Activated CD8-positive, alpha-beta T cell treated with anti-CD3 and anti-CD28 coated beads, Interleukin-2, amount 10 ng/mL, durations not matched to agents 7 days and 5 days (primary cell): ENCODE measurements at regions of chr4 and their contacts with region 1.

Region 1: GRCh38 chr4:173334085-173334772 is at the start of gene HMGB2:
- DNase-seq: peak; percentile 100
- ATAC-seq: peak; percentile 95
- H3K4me3 Mint-ChIP-seq: peak within 1 kb of the TSS; percentile 97
- H3K27ac Mint-ChIP-seq: peak within 1 kb of the TSS; percentile 98
- H3K4me1 Mint-ChIP-seq: peaks cover 38% of the 10 kb centered on the region
- H3K27me3 Mint-ChIP-seq: no peaks in the 10 kb centered on the region
- total RNA-seq, gene HMGB2: 861 to 891 TPM

Region 2: GRCh38 chr4:173168396-173169177 is 165.6 kb before region 1 on chr4 and contains the start of gene GALNT7:
- CTCF ChIA-PET with region 1: no interaction called
- POLR2A ChIA-PET with region 1: interaction called, 13 read pairs
- DNase-seq: peak; percentile 75
- ATAC-seq: peak; percentile 59
- H3K4me3 Mint-ChIP-seq: peak within 1 kb of the TSS; percentile 94
- H3K27ac Mint-ChIP-seq: peak within 1 kb of the TSS; percentile 94
- H3K4me1 Mint-ChIP-seq: peaks cover 47% of the 10 kb centered on the region
- H3K27me3 Mint-ChIP-seq: no peaks in the 10 kb centered on the region
- total RNA-seq, gene GALNT7: 16.2 to 16.7 TPM

Region 3: DNA sequence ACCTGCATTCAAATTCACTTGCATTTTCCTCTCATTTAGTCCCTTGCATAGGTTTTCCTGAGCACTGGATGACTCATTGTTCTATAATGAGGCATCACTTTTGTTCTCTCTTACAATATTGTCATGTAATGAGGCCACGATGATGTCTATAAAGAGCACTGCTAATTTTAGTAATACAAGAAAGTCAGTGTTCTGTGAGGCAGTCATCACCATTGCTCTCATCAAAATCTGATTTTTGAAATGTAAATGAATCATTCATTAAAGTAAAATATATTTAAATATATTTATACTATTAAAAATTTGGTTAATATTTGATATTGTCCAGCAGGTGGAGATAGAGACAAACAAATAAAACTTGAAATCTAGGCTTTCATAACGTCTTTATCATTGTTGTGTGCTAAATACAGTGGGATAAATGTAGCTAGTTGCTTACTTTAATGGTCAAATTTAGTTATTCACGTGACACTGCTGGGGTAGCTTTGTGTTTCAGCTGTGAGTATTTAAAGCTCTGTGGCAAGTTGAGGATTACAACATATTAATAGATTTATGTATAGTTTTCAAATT is 15.5 kb before region 1 on chr4:
- CTCF ChIA-PET with region 1: interaction called, 13 read pairs
- POLR2A ChIA-PET with region 1: interaction called, 40 read pairs
- DNase-seq: no peak
- ATAC-seq: no peak
- H3K4me3 Mint-ChIP-seq: no peak overlapping the region
- H3K27ac Mint-ChIP-seq: no peak overlapping the region
- H3K4me1 Mint-ChIP-seq: no peaks in the 10 kb centered on the region
- H3K27me3 Mint-ChIP-seq: no peaks in the 10 kb centered on the region

Region 4: DNA sequence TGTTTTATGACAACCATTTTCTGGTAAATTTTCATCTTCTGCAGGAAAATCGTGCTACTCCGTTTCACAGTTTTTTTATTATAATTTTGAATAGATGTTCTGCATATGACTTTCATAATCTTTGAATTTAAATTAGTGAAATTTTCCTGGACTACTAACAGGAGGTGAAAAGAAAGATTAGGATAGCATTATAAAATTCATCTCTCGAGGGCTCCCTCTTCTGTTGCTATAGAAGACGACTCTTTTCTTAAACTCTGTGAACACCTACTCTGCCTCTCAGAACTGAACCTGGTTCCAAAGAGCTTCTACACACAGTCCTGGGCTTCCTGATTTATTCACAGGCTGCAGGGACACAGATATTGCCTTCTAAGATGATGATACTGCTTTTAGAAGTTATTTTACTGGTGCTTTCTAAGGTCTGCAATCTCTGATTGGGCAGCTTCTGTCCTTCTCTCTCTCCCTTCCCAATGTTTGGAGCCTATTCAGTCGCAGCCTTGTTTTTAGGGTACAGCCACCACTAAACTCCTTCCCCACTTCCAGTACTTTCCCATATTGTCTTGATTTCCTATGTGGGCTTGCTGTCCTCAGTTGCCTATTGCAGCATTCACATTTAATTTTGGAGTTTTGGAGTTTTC is 26.5 kb after region 1 on chr4:
- CTCF ChIA-PET with region 1: interaction called, 8 read pairs
- POLR2A ChIA-PET with region 1: interaction called, 13 read pairs
- DNase-seq: no peak
- ATAC-seq: no peak
- H3K4me3 Mint-ChIP-seq: no peak overlapping the region
- H3K27ac Mint-ChIP-seq: no peak overlapping the region
- H3K4me1 Mint-ChIP-seq: peaks cover 16% of the 10 kb centered on the region
- H3K27me3 Mint-ChIP-seq: peaks cover 3% of the 10 kb centered on the region

Region 5: DNA sequence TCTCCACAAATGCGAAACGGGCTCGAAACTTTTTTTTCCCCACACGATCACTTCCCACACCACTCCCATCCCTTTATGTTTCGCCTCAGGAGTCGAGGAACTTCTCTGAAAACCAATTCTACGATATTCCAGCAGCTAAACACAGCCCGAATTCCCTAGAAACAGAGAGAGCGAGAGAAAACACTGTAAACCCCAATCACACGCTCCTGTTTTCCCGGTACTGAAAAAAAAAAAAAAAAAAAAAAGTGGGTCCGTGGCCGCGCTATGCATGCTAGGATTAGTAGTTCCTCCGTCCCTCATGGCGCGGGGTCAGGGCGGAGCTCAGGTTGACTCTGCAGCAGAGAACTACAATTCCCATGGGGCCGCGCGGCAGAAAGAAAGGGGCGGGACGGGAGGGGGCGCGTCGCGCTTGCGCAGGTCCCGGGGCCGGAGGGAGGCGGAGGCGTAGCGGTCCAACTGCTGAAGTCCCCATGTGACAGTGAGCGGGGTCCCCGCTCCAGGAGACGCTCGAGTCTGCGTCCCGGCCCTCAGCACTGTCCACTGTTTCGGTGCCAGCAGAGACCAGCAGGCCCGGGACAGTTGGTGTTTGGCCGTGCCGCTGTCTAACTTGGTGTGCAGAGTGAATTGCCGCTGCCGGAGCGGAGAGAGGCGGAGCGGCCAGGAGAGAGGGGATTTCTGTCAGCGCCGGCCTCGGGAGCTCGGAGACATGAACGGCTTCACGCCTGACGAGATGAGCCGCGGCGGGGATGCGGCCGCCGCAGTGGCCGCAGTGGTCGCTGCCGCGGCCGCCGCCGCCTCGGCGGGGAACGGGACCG is 36.5 kb after region 1 on chr4 and contains the start of gene SAP30:
- CTCF ChIA-PET with region 1: interaction called, 48 read pairs
- POLR2A ChIA-PET with region 1: interaction called, 329 read pairs
- DNase-seq: peak; percentile 98
- ATAC-seq: peak; percentile 82
- H3K4me3 Mint-ChIP-seq: peak within 1 kb of the TSS; percentile 100
- H3K27ac Mint-ChIP-seq: peak within 1 kb of the TSS; percentile 96
- H3K4me1 Mint-ChIP-seq: peaks cover 33% of the 10 kb centered on the region
- H3K27me3 Mint-ChIP-seq: no peaks in the 10 kb centered on the region
- total RNA-seq, gene SAP30: 19.7 to 21.0 TPM

Region 6: DNA sequence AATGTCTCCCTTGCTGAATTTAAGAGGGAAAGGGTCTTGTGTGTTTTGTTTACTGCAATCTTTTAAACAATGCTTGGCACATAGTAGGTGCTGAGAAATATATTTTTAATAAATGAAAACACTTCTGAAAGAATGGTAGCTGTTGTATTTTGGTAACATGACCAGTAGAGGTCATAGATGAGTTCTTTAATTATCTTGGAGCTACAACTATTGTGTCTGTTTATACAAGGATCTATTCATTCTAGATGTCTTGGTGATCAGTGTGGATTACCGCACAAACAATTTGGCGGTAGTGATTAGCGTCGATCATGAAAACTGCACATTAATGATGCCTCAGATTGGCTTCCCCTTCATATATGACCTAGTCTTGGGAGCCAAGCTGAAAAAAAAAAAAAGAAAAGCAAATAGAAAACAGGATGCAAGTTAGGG is 86.1 kb after region 1 on chr4:
- CTCF ChIA-PET with region 1: interaction called, 11 read pairs
- POLR2A ChIA-PET with region 1: interaction called, 4 read pairs
- DNase-seq: no peak
- ATAC-seq: no peak
- H3K4me3 Mint-ChIP-seq: no peak overlapping the region
- H3K27ac Mint-ChIP-seq: no peak overlapping the region
- H3K4me1 Mint-ChIP-seq: peaks cover 9% of the 10 kb centered on the region
- H3K27me3 Mint-ChIP-seq: peaks cover 9% of the 10 kb centered on the region